Mammary epithelial cell (primary cell): ENCODE measurements at regions of chr10 and their contacts with region 1.

Region 1: DNA sequence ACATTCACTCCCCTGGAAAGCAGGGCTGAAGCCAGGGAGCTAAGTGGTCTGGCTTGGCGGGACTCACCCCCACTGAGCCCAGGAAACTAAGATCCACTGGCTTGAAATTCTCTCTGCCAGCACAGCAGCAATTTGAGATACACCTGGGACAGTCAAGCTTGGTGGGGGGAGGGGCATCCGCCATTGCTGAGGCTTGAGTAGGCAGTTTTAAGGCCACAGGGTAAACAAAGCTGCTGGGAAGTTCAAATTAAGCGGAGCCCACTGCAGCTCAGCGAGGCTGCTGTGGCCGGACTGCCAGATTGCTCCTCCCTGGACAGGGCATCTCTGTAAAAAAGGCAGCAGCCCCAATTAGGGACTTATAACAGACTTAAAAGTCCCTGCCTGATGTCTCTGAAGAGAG is 108.2 kb upstream of the FAM13C start:
- DNase-seq: no peak
- H3K4me3 ChIP-seq: no peak overlapping the region
- H3K27ac ChIP-seq: no peak overlapping the region
- H3K4me1 ChIP-seq: no peaks in the 10 kb centered on the region
- H3K27me3 ChIP-seq: no peaks in the 10 kb centered on the region
- CTCF ChIP-seq: no peak

Region 2: DNA sequence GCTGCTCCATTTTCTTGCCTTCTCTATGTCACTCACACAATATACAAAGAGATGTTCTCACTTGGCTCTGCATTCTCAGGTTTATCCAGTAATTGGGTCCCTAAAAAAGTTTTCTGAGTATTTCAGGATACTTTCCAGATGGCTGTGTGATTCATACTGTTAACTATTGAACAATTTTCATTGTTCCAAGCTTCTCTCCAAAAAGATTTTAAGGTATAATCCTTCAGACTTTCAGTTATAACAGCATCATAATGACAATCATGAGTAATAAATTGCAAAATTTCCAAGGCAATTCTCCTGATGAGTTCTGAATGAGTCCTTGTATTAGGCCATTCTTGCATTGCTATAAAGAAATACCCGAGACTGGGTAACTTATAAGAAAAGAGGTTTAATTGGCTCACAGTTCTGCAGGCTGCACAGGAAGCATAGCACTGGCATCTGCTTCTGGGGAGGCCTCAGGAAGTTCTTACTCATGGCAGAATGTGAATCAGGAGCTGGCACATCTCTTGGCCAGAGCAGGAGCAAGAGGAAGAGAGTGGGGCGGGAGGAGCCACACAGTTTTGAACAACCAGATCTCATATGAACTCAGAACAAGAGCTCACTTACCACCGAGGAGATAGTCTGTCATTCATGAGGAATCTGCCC is 91.0 kb after region 1 on chr10:
- CTCF ChIA-PET with region 1: no interaction called
- dilution Hi-C with region 1: loop called (anchors 5 kb)
- in situ Hi-C with region 1: no loop called
- intact Hi-C with region 1: no loop called
- DNase-seq: peak; percentile 17
- H3K4me3 ChIP-seq: no peak overlapping the region
- H3K27ac ChIP-seq: no peak overlapping the region
- H3K4me1 ChIP-seq: no peaks in the 10 kb centered on the region
- H3K27me3 ChIP-seq: no peaks in the 10 kb centered on the region
- CTCF ChIP-seq: no peak